Activated CD4-positive, alpha-beta memory T cell treated with anti-CD3 and anti-CD28 coated beads for 36 hours (primary cell): ENCODE measurements at regions of chr1 and their contacts with region 1.

Region 1: GRCh38 chr1:32650752-32651460 is at the start of gene RBBP4:
- DNase-seq: peak; percentile 99
- H3K4me3 Mint-ChIP-seq: peak within 1 kb of the TSS; percentile 99
- H3K27ac Mint-ChIP-seq: peak within 1 kb of the TSS; percentile 100
- H3K4me1 Mint-ChIP-seq: peaks cover 49% of the 10 kb centered on the region
- H3K27me3 Mint-ChIP-seq: no peaks in the 10 kb centered on the region
- total RNA-seq, gene RBBP4: 325 to 334 TPM

Region 2: DNA sequence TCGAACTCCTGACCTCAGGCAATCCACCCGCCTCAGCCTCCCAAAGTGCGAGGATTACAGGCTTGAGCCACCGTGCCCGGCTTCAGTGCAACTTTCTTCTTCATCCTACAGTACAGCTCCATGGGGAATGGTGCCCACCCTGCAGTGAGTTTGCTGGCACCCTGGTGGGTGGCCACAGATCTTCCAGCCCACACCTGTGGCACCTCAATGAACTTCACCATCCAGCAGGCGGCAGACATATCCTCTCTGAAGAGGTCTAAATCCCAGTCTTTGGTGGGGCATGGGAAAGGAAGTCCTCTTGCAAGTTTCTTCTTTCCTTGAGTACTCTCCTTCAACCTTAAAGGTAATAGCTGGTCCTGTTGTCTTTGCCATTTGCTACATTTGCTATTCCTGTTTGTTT is 129.7 kb before region 1 on chr1:
- CTCF ChIA-PET with region 1: interaction called, 9 read pairs
- POLR2A ChIA-PET with region 1: no interaction called
- intact Hi-C with region 1: loop called (anchors 1 kb)
- DNase-seq: no peak
- H3K4me3 Mint-ChIP-seq: peak overlapping the region; percentile 64
- H3K27ac Mint-ChIP-seq: no peak overlapping the region
- H3K4me1 Mint-ChIP-seq: peaks cover 6% of the 10 kb centered on the region
- H3K27me3 Mint-ChIP-seq: peaks cover 7% of the 10 kb centered on the region

Region 3: GRCh38 chr1:32619701-32620485 is 31.0 kb before region 1 on chr1:
- CTCF ChIA-PET with region 1: interaction called, 3 read pairs
- POLR2A ChIA-PET with region 1: interaction called, 3 read pairs
- intact Hi-C with region 1: loop called (anchors 1 kb)
- DNase-seq: peak; percentile 28
- H3K4me3 Mint-ChIP-seq: no peak overlapping the region
- H3K27ac Mint-ChIP-seq: no peak overlapping the region
- H3K4me1 Mint-ChIP-seq: peaks cover 33% of the 10 kb centered on the region
- H3K27me3 Mint-ChIP-seq: no peaks in the 10 kb centered on the region

Region 4: DNA sequence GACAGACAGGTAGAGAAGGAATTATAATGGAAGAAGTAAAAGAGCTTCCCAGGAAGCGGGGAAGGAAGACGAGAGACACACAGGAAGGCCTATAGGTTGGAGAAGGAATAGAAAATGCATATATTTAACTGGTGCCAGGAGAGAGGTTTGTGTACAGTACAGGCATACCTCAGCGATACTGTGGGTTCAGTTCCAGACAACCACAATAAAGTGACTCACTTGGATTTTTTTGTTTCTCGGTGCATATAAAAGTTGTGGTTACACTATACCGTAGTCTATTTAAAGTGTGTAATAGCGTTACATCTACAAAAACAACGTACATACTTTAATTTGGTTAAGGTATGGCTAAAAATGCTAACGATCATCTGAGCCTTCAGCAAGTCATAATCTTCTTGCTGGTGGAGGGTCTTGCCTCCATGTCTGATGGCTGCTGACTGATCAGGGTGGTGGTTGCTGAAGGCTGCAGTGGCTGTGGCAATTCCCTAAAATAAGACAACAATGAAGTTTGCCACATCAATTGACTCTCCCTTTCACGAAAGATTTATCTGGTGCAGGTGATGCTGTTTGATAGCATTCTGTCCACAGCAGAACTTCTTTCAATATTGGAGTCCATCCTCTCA is 150.3 kb after region 1 on chr1:
- CTCF ChIA-PET with region 1: no interaction called
- POLR2A ChIA-PET with region 1: no interaction called
- intact Hi-C with region 1: loop called (anchors 1 kb)
- DNase-seq: peak; percentile 58
- H3K4me3 Mint-ChIP-seq: peak overlapping the region; percentile 13
- H3K27ac Mint-ChIP-seq: peak overlapping the region; percentile 74
- H3K4me1 Mint-ChIP-seq: peaks cover 56% of the 10 kb centered on the region
- H3K27me3 Mint-ChIP-seq: no peaks in the 10 kb centered on the region

Region 5: GRCh38 chr1:32817159-32817814 is 166.4 kb after region 1 on chr1 and contains the starts of genes S100PBP and YARS1:
- CTCF ChIA-PET with region 1: no interaction called
- POLR2A ChIA-PET with region 1: interaction called, 13 read pairs
- intact Hi-C with region 1: loop called (anchors 1 kb)
- DNase-seq: peak; percentile 100
- H3K4me3 Mint-ChIP-seq: peak within 1 kb of the TSS; percentile 99
- H3K27ac Mint-ChIP-seq: peak within 1 kb of the TSS; percentile 94
- H3K4me1 Mint-ChIP-seq: peaks cover 50% of the 10 kb centered on the region
- H3K27me3 Mint-ChIP-seq: no peaks in the 10 kb centered on the region
- total RNA-seq, gene S100PBP: 30.4 to 32.7 TPM
- total RNA-seq, gene YARS1: 208 to 213 TPM

Region 6: DNA sequence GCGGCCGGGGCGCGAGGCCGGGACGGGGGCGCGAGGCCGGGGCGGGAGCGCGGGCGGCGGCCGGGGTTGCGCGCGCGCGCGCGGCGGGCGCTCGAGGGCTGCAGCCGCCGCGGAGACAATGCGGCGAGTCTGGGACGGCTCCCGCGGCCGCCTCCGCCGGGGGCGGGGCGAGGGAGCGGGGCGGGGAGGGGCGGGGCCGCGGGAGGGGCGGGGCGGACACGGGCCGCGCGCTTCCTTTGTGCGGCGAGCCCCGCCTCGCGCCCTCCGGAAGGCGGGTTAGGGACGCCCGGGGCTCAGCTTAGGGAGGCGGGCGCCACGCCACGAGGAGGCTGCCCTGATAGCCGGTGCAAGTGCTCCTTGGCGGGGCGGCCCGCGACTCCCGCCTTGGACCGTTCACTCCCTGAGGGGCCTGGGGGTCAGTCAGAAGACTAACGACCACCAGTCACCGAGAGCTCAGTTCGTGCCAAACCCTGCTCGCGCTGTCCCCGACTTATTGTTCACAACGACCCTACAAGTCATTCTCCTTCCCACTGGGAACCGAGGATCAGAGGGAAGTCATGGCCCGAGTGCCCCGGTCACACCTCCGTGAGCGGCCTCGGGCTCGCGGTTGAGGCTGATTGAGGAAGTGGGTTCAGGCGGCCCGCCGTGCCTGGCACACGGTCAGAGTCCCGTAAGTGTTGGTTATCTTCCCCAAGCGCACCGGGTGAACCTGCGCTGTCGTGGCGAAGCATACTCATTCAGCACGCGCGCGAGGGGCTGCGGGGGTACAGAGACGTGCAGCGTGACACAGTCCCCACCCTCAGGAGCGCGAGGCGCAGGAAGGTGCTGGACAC is 699.1 kb after region 1 on chr1:
- CTCF ChIA-PET with region 1: no interaction called
- POLR2A ChIA-PET with region 1: no interaction called
- intact Hi-C with region 1: loop called (anchors 5 kb)
- DNase-seq: peak; percentile 84
- H3K4me3 Mint-ChIP-seq: peak overlapping the region; percentile 91
- H3K27ac Mint-ChIP-seq: peak overlapping the region; percentile 94
- H3K4me1 Mint-ChIP-seq: peaks cover 46% of the 10 kb centered on the region
- H3K27me3 Mint-ChIP-seq: no peaks in the 10 kb centered on the region